Activated CD4-positive, alpha-beta T cell treated with anti-CD3 and anti-CD28 coated beads for 36 hours (primary cell): ENCODE measurements at regions of chrX and their contacts with region 1.

Region 1: DNA sequence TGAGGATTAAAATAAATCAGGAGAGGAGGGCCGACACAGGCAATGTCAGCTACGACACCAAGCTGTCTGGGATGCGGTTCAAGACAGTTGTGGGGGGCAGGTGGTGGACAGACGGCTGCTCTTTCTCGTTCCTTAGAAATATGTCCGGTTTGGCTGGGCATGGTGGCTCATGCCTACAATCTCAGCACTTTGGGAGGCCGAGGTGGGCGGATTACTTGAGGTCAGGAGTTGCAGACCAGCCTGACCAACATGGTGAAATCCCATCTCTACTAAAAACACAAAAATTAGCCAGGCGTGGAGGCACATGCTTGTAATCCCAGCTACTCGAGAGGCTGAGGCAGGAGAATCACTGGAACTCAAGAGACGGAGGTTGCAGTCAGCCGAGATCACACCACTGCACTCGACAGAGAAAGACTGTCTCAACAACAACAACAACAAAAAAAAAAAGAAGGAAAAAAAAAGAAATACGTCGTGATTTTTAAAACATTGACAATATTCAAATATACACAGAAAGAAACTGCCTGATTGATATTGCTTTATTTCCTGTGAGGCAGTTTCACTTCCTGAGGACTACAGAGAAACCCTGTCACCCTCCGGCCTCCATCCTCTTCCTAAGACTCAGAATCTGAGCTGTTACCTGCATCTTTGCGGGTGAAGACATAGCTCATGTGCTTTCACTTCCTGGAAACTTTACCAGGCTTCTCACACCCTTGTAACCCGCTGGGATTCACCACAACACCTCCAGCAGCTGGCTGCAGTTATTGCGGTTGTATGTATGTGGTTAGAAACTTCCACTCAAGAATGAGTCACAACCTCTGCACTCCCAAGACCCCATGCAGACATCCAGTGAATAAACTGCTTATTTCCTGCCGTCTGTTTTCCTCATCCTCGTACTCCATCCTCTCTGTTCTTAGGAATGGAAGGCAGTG is 63.8 kb upstream of the STS start:
- DNase-seq: peak; percentile 74
- ATAC-seq: peak; percentile 94
- H3K4me3 Mint-ChIP-seq: no peak overlapping the region
- H3K27ac Mint-ChIP-seq: peak overlapping the region; percentile 60
- H3K4me1 Mint-ChIP-seq: peaks cover 44% of the 10 kb centered on the region
- H3K27me3 Mint-ChIP-seq: peaks cover 6% of the 10 kb centered on the region

Region 2: DNA sequence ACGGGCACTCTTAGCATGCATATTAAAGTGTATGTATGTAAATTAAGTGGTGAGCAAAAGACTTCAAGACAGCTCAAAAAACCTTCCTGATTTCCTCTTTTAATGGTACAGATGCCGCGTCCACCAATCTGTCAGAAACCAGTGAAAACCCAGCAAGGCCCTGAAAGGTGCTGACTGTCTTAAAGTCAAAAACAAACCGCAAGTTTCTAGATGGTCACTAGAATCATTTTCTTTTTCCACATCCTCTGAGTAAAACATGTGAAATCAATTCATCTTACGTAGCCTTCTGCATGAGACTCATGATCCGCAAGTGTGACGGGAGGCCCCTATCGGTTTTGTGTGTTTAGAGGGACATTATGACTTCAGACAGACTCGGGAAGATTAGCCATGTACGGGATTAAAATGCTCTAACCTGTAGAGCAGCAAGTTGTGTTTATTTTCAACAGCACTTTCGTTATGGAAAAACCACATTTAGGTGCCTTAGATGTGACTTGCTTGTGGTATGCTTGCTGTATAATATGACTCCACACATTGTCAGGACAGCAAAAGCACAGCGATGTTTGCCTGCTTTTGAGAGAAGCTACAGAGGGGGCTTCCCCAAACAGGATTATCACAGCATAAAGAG is 24.4 kb before region 1 on chrX:
- CTCF ChIA-PET with region 1: interaction called, 3 read pairs
- POLR2A ChIA-PET with region 1: interaction called, 11 read pairs
- intact Hi-C with region 1: loop called (anchors 1 kb)
- DNase-seq: peak; percentile 56
- ATAC-seq: peak; percentile 91
- H3K4me3 Mint-ChIP-seq: no peak overlapping the region
- H3K27ac Mint-ChIP-seq: peak overlapping the region; percentile 19
- H3K4me1 Mint-ChIP-seq: peaks cover 35% of the 10 kb centered on the region
- H3K27me3 Mint-ChIP-seq: no peaks in the 10 kb centered on the region

Region 3: GRCh38 chrX:7706032-7706431 is 622.3 kb after region 1 on chrX:
- CTCF ChIA-PET with region 1: no interaction called
- POLR2A ChIA-PET with region 1: no interaction called
- intact Hi-C with region 1: no loop called
- DNase-seq: no peak
- ATAC-seq: no peak
- H3K4me3 Mint-ChIP-seq: no peak overlapping the region
- H3K27ac Mint-ChIP-seq: no peak overlapping the region
- H3K4me1 Mint-ChIP-seq: no peaks in the 10 kb centered on the region
- H3K27me3 Mint-ChIP-seq: no peaks in the 10 kb centered on the region

Region 4: GRCh38 chrX:7925867-7926472 is 842.2 kb after region 1 on chrX:
- CTCF ChIA-PET with region 1: no interaction called
- POLR2A ChIA-PET with region 1: no interaction called
- intact Hi-C with region 1: loop called in 1 of 2 experiments (anchors 10 kb)
- DNase-seq: peak; percentile 71
- ATAC-seq: peak; percentile 40
- H3K4me3 Mint-ChIP-seq: peak overlapping the region; percentile 80
- H3K27ac Mint-ChIP-seq: peak overlapping the region; percentile 42
- H3K4me1 Mint-ChIP-seq: peaks cover 13% of the 10 kb centered on the region
- H3K27me3 Mint-ChIP-seq: no peaks in the 10 kb centered on the region